ENCODE measurements at regions of chr1 and their contacts with region 1.

Region 1: GRCh38 chr1:180252638-180253536 is 22.8 kb downstream of the LHX4 start:
- DNase-seq: peak; percentile 47 to 63
- H3K4me3 ChIP-seq: no peak overlapping the region
- H3K27ac ChIP-seq: no peak overlapping the region
- H3K4me1 ChIP-seq: 0 out of 2 replicates have a peak, but pooled peaks cover under 1% of the 10 kb centered on the region
- H3K27me3 ChIP-seq: no peaks in the 10 kb centered on the region
- CTCF ChIP-seq: peak; percentile 89

Region 2: DNA sequence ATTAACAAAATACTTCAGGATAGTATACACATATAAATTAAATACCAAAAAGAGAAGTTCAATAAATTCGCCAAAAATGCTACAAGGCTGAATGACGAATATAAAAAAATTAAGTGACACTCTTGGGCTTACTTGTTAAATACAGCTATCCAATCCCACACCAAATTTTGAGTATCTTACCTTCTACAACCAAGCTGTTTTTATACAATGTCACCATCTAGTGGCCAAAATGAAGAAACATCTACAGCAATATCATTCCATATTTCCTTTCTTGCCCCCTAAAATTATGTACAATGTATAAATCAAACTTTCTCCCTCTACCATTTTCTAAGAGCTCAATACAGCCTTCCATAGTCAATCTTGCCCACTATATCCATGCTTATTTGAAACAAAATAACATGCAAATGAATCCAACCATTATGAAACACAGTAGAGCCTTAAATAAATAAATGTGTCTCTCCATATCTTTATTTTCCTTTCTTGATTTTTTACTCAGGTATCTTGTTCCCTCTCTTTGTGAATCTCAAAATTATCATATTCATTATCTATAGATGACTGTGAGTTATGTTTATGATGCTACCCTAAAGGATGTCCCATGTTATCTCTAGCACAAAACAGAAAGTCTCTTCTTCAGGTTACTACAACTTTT is 163.2 kb after region 1 on chr1:
- CTCF ChIA-PET with region 1: no interaction called
- POLR2A ChIA-PET with region 1: no interaction called
- intact Hi-C with region 1: loop called (anchors 1 kb)
- DNase-seq: no peak
- H3K4me3 ChIP-seq: no peak overlapping the region
- H3K27ac ChIP-seq: no peak overlapping the region
- H3K4me1 ChIP-seq: no peaks in the 10 kb centered on the region
- H3K27me3 ChIP-seq: no peaks in the 10 kb centered on the region
- CTCF ChIP-seq: peak; percentile 82

Region 3: GRCh38 chr1:180482425-180483275 is 229.8 kb after region 1 on chr1:
- CTCF ChIA-PET with region 1: interaction called, 3 read pairs
- POLR2A ChIA-PET with region 1: no interaction called
- intact Hi-C with region 1: loop called (anchors 5 kb)
- DNase-seq: peak in 1 of 2 experiments; percentile 45
- H3K4me3 ChIP-seq: no peak overlapping the region
- H3K27ac ChIP-seq: no peak overlapping the region
- H3K4me1 ChIP-seq: no peaks in the 10 kb centered on the region
- H3K27me3 ChIP-seq: no peaks in the 10 kb centered on the region
- CTCF ChIP-seq: peak; percentile 83

Measured in PC-9 (cell line).